ENCODE measurements at regions of chr11 and their contacts with region 1.

Region 1: GRCh38 chr11:20337526-20338154 is 25.9 kb upstream of the HTATIP2 start:
- DNase-seq: peak in 1 of 2 experiments; percentile 55
- H3K4me3 ChIP-seq: no peak overlapping the region
- H3K27ac ChIP-seq: no peak overlapping the region
- H3K4me1 ChIP-seq: peaks cover 0 to 4% (median 3%) of the 10 kb centered on the region in 4 experiments; a peak in 6 of 7 replicates
- H3K27me3 ChIP-seq: peaks cover 0 to 1% (median 0%) of the 10 kb centered on the region in 4 experiments; a peak in 2 of 7 replicates
- CTCF ChIP-seq: peak; percentile 51 to 73 (median 61)
- EP300 ChIP-seq: no peak
- POLR2A ChIP-seq: no peak
- RAD21 ChIP-seq: peak; percentile 84 to 87

Region 2: GRCh38 chr11:20243974-20244373 is 93.7 kb before region 1 on chr11:
- CTCF ChIA-PET with region 1: interaction called, 10 read pairs
- POLR2A ChIA-PET with region 1: no interaction called
- DNase-seq: no peak
- H3K4me3 ChIP-seq: no peak overlapping the region
- H3K27ac ChIP-seq: no peak overlapping the region
- H3K4me1 ChIP-seq: peaks cover 2 to 8% (median 5%) of the 10 kb centered on the region in 4 experiments; a peak in 4 of 7 replicates
- H3K27me3 ChIP-seq: peaks cover 0 to 1% (median 0%) of the 10 kb centered on the region in 4 experiments; a peak in 2 of 7 replicates
- CTCF ChIP-seq: peak in 2 of 3 experiments; percentile 43 to 48; a peak in 2 of 4 replicates
- EP300 ChIP-seq: no peak
- POLR2A ChIP-seq: no peak
- RAD21 ChIP-seq: peak; percentile 39 to 41